HAP-1 (cell line): ENCODE measurements at regions of chr3 and their contacts with region 1.

Region 1: GRCh38 chr3:124014366-124014942 is 22.5 kb upstream of the ROPN1 start:
- DNase-seq: no peak
- H3K4me3 ChIP-seq: no peak overlapping the region
- H3K4me1 ChIP-seq: no peaks in the 10 kb centered on the region; the same call in 1 of the 2 replicates
- H3K27me3 ChIP-seq: peaks cover 20% of the 10 kb centered on the region

Region 2: GRCh38 chr3:123907720-123908119 is 106.7 kb before region 1 on chr3:
- in situ Hi-C with region 1: no loop called
- DNase-seq: no peak
- H3K4me3 ChIP-seq: no peak overlapping the region
- H3K4me1 ChIP-seq: no peaks in the 10 kb centered on the region
- H3K27me3 ChIP-seq: no peaks in the 10 kb centered on the region

Region 3: GRCh38 chr3:124084022-124084881 is 69.8 kb after region 1 on chr3:
- in situ Hi-C with region 1: loop called (anchors 10 kb)
- DNase-seq: no peak
- H3K4me3 ChIP-seq: no peak overlapping the region
- H3K4me1 ChIP-seq: no peaks in the 10 kb centered on the region
- H3K27me3 ChIP-seq: peaks cover 6% of the 10 kb centered on the region

Region 4: GRCh38 chr3:125212509-125213244 is 1198.2 kb after region 1 on chr3 and contains the start of gene SLC12A8:
- in situ Hi-C with region 1: no loop called
- DNase-seq: no peak
- H3K4me3 ChIP-seq: no peak within 1 kb of the TSS
- H3K4me1 ChIP-seq: no peaks in the 10 kb centered on the region; the same call in 1 of the 2 replicates
- H3K27me3 ChIP-seq: no peaks in the 10 kb centered on the region